Posterior cingulate gyrus (tissue), 11 donors: ENCODE measurements at regions of chr6 and their contacts with region 1.

Region 1: DNA sequence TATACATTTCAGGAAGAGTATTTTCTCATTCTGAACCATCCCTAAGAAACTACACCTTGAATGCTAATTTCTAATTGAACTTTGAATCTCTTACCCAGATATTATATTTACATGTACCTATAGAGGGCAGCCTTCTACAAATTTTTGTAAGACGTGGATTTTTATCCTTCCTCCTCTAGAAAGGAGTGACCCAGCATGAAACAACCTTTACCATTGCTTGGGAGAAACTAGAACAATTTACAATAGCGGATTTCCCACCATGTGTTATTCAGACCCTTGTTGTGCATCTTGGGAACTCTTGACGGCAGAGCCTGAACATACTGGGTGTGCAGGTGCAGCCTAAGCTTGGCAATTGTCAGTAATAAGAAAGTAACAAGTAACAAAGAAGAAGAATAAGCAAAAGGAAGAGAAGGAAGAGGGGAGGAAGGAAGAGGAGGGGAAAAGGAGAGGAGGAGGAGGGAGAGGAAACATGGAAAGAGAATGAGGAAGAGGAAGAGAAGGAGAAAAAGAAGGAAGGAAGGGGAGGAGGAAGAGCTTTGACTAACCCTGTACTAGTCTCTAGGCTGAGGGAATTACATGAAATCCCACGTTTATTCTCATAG is 10.8 kb upstream of the TAAR1 start:
- DNase-seq: no peak

Region 2: GRCh38 chr6:132333639-132334520 is 335.9 kb before region 1 on chr6:
- intact Hi-C with region 1: no loop called
- DNase-seq: no peak

Region 3: DNA sequence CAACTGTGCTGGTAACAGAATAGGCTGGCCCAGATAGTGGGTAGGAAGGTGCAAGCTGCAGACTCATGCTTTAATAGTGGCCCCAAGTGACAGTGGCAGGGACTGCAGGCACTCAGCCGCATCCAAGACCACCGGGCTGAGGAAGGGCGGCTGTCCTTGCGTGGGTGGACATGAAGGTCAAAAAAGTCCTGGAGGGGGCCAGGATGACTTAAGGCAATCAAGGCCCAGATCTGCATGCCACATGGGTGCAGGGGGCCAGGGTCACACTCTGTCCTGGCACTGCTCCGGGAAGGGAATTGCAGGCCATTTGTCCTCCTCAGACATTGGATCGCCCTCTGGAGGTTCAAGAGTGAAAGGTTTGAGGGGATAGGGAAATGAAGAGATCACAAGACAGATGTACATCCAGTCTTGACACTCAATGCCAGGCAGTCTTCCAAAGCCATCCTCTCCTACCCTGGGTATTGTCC is 98.3 kb after region 1 on chr6:
- intact Hi-C with region 1: loop called (anchors 1 kb)
- DNase-seq: peak in 2 of 10 donors; percentile 11 to 79